IMR-90 (cell line): ENCODE measurements at regions of chr5 and their contacts with region 1.

Region 1: GRCh38 chr5:36861820-36862219 is 14.7 kb upstream of the NIPBL start:
- DNase-seq: peak; percentile 29
- ATAC-seq: peak; percentile 57
- H3K4me3 ChIP-seq: no peak overlapping the region
- H3K27ac ChIP-seq: no peak overlapping the region
- H3K4me1 ChIP-seq: no peaks in the 10 kb centered on the region
- H3K27me3 ChIP-seq: peaks cover 2% of the 10 kb centered on the region; the same call in 1 of the 2 replicates
- CTCF ChIP-seq: no peak
- POLR2A ChIP-seq: no peak
- RAD21 ChIP-seq: no peak

Region 2: GRCh38 chr5:36739751-36740221 is 122.0 kb before region 1 on chr5:
- CTCF ChIA-PET with region 1: interaction called, 4 read pairs
- POLR2A ChIA-PET with region 1: no interaction called
- dilution Hi-C with region 1: no loop called
- in situ Hi-C with region 1: loop called (anchors 5 kb)
- intact Hi-C with region 1: no loop called
- DNase-seq: peak; percentile 69
- ATAC-seq: peak; percentile 61
- H3K4me3 ChIP-seq: no peak overlapping the region; the same call in 1 of the 2 replicates
- H3K27ac ChIP-seq: no peak overlapping the region
- H3K4me1 ChIP-seq: peaks cover 4% of the 10 kb centered on the region
- H3K27me3 ChIP-seq: peaks cover 18% of the 10 kb centered on the region
- CTCF ChIP-seq: peak; percentile 72
- POLR2A ChIP-seq: no peak
- RAD21 ChIP-seq: peak; percentile 59